ENCODE measurements at regions of chr3 and their contacts with region 1.

Region 1: GRCh38 chr3:157572559-157573270 is 69.5 kb upstream of the VEPH1 start:
- DNase-seq: no peak
- ATAC-seq: no peak

Region 2: DNA sequence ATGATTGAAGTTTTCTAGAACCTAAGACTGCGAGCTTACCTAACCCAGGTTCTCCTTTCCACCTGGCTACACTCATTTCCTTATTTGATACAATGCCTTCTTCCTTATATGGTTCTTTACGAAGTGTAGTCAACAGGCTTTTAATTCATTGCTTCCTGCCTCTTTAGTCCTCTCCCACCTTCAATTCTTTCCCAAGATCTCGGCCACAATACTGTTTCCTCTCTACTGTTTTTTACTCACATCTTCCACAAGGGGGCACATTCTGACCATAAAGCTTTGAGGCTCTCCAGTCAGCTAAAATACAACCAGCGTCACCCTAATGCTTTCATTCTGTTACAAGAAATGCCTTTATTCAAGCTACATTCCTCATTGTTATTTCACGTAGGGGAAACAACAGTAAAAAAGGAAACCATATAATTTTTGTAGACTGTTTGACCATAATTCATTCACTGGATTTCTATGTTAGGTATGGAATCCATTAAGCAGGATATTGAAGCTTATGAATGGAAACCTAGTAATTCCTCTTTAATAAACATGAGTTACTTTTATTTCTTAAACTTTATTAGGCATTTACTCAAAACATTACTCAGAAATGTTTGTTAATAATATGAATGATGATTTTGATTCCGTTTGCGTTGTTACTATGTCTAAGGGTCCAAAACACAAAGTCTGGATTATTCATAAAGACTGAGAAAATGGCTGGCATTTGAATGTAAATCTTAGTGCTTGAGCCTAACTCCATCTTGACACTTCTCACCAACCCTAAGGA is 40.0 kb before region 1 on chr3:
- intact Hi-C with region 1: loop called (anchors 2 kb)
- DNase-seq: no peak
- ATAC-seq: peak; percentile 80